Activated T-helper 1 cell treated with anti-CD3 and anti-CD28 coated beads, Interleukin-12 subunit alpha, Interleukin-12 subunit beta, Interleukin-2, Interleukin-4 antibody, amounts not matched to agents 30 ng/mL and 10 ng/mL and 1 ng/mL, durations not matched to agents 14 hours and 24 hours and 36 hours (primary cell): ENCODE measurements at regions of chr6 and their contacts with region 1.

Region 1: DNA sequence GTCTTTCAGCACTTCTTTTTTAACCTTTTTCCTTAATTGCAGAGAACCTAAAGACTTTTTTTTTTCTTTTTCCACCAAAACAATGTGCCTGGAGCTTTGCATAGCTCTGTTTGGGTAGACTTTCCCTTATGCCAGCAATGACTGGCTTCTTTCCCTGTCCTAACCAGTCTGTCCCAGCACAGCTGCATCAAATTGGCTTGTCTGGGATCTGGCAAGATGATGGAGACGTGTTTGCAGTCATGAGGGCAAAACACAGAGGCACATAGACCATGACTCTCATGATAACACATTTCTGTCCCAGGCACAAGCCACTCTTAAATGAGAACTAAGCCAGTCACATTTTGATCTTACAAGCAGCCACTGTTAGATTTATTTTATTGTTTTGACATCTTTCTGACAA is 16.5 kb downstream of the HEY2 start:
- DNase-seq: no peak
- H3K4me3 Mint-ChIP-seq: no peak overlapping the region
- H3K27ac Mint-ChIP-seq: no peak overlapping the region
- H3K4me1 Mint-ChIP-seq: no peaks in the 10 kb centered on the region
- H3K27me3 Mint-ChIP-seq: peaks cover 50% of the 10 kb centered on the region

Region 2: GRCh38 chr6:125153391-125154117 is 612.4 kb before region 1 on chr6 and contains the start of gene TPD52L1:
- intact Hi-C with region 1: loop called (anchors 1 kb)
- DNase-seq: peak; percentile 31
- H3K4me3 Mint-ChIP-seq: peak within 1 kb of the TSS; percentile 74
- H3K27ac Mint-ChIP-seq: no peak within 1 kb of the TSS
- H3K4me1 Mint-ChIP-seq: no peaks in the 10 kb centered on the region
- H3K27me3 Mint-ChIP-seq: peaks cover 43% of the 10 kb centered on the region
- total RNA-seq, gene TPD52L1: 0.29 TPM in 1 of 2 replicates, not detected in the other

Region 3: GRCh38 chr6:125191916-125192609 is 573.9 kb before region 1 on chr6:
- intact Hi-C with region 1: loop called (anchors 5 kb)
- DNase-seq: peak; percentile 40
- H3K4me3 Mint-ChIP-seq: no peak overlapping the region
- H3K27ac Mint-ChIP-seq: no peak overlapping the region
- H3K4me1 Mint-ChIP-seq: peaks cover 8% of the 10 kb centered on the region
- H3K27me3 Mint-ChIP-seq: peaks cover 9% of the 10 kb centered on the region

Region 4: DNA sequence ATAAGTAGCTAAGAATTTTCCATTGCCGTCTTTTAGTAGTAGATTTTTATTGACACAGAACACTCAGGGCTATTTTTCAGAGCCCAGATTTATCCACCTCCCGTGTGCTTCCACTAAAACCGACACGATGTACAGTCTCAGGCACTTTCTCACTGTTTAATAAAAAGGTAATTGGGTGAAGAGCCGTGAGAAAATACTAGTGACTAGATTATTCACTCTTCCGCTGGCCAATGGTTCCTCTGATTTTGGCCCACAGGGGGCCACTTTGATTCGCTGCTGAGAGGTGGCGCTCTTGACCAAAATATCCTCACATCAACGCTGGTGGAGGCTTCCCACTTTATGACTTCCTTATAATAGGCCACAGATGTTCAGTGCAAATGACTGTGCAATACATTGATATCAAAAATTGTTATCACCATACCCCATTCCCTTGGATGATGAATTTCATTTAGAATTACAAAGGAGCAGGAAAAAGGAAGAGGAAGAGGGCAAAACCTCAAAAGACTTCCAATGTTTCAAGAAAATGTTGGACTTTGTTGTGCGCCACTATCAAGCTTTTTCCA is 451.8 kb before region 1 on chr6:
- intact Hi-C with region 1: loop called (anchors 1 kb)
- DNase-seq: peak; percentile 17
- H3K4me3 Mint-ChIP-seq: no peak overlapping the region
- H3K27ac Mint-ChIP-seq: no peak overlapping the region
- H3K4me1 Mint-ChIP-seq: no peaks in the 10 kb centered on the region
- H3K27me3 Mint-ChIP-seq: peaks cover 6% of the 10 kb centered on the region

Region 5: GRCh38 chr6:125512621-125513020 is 253.3 kb before region 1 on chr6:
- intact Hi-C with region 1: loop called (anchors 1 kb)
- DNase-seq: no peak
- H3K4me3 Mint-ChIP-seq: no peak overlapping the region
- H3K27ac Mint-ChIP-seq: no peak overlapping the region
- H3K4me1 Mint-ChIP-seq: no peaks in the 10 kb centered on the region
- H3K27me3 Mint-ChIP-seq: peaks cover 5% of the 10 kb centered on the region